ENCODE measurements at regions of chr1 and their contacts with region 1.

Region 1: DNA sequence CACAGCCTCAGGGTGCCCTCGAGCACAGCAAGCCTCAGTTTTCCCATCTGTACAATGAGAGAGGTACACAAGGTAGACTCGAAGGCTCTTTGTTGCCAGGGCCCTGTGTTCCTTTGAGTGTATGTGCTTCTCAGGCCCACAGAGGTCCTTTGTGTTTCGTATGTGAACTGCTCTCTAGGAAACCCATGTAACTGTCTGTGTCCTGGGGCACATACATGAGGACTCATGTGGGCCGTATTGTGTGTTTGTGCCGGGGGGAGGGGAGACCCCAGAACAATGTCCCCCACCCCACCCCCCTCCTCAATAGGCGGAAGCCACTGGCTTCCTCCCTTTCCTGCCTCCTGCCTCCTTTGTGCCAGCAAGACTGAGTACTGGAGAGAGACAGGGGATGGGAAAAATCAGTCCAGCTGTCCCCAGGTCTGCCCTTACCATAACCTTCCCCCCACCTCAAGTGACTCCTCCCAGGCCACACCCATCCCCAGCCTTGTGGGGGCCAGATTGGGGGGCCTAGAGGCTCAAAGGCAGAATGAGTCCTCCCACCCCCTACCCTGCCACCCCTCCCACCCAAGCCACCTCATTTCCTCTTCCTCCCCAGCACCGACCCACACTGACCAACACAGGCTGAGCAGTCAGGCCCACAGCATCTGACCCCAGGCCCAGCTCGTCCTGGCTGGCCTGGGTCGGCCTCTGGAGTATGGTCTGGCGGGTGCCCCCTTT is at the start of gene TIE1:
- DNase-seq: peak; percentile 94
- H3K4me3 ChIP-seq: peak within 1 kb of the TSS; percentile 47 to 96 (median 76)
- H3K27ac ChIP-seq: peak within 1 kb of the TSS; percentile 84
- H3K4me1 ChIP-seq: peaks cover 45% of the 10 kb centered on the region
- H3K27me3 ChIP-seq: no peaks in the 10 kb centered on the region
- CTCF ChIP-seq: no peak
- POLR2A ChIP-seq: peak; percentile 98
- total RNA-seq, gene TIE1: 562 and 620 TPM in 2 replicates

Region 2: DNA sequence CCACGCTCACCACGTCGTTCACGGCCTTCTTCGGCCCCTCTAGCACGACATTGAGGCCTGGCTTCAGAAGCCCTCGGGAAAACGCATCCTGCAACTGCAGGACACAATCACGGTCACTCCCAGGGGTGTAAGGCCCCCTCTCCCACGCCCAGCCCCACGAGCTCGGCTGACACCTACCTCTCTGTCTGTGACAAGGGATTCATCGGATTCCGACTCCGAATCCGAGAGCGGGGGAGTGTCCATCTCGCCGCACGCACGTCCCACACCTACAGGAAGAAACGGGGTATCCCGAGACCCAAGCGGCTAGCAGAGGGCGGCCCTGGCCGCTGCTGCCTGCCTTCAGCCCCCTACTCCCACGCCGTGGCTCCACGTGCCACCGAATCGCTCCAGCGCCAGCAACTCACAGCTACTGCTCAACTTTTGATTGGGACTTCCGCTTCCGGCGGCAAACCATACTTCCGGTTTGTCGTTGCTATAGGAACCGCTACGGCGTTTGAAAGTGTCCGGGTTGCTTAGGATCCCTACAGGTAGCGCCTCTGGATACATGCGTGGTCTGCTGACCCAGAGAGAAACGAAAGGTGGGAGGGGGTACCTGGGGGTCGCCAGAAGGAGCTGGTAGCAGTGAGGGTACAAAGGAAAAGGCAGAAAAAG is 128.5 kb before region 1 on chr1 and contains the starts of genes CFAP57 and EBNA1BP2:
- CTCF ChIA-PET with region 1: interaction called, 4 read pairs
- POLR2A ChIA-PET with region 1: no interaction called
- dilution Hi-C with region 1: no loop called
- intact Hi-C with region 1: loop called (anchors 1 kb)
- DNase-seq: peak; percentile 94
- H3K4me3 ChIP-seq: peak within 1 kb of the TSS; percentile 6 to 81 (median 51)
- H3K27ac ChIP-seq: peak within 1 kb of the TSS; percentile 30
- H3K4me1 ChIP-seq: peaks cover 12% of the 10 kb centered on the region
- H3K27me3 ChIP-seq: peaks cover 0 to 2% of the 10 kb centered on the region in 2 experiments
- CTCF ChIP-seq: no peak
- POLR2A ChIP-seq: peak; percentile 81
- total RNA-seq, gene CFAP57: 0.28 and 0.88 TPM in 2 replicates
- total RNA-seq, gene EBNA1BP2: 104 and 105 TPM in 2 replicates

Region 3: GRCh38 chr1:43238085-43238484 is 62.5 kb before region 1 on chr1:
- CTCF ChIA-PET with region 1: interaction called, 32 read pairs
- POLR2A ChIA-PET with region 1: interaction called, 5 read pairs
- dilution Hi-C with region 1: no loop called
- intact Hi-C with region 1: loop called (anchors 1 kb)
- DNase-seq: peak; percentile 77
- H3K4me3 ChIP-seq: no peak overlapping the region
- H3K27ac ChIP-seq: no peak overlapping the region
- H3K4me1 ChIP-seq: peaks cover 6% of the 10 kb centered on the region
- H3K27me3 ChIP-seq: no peaks in the 10 kb centered on the region
- CTCF ChIP-seq: peak; percentile 81 to 86
- POLR2A ChIP-seq: no peak

Region 4: GRCh38 chr1:43280692-43281091 is 19.8 kb before region 1 on chr1:
- CTCF ChIA-PET with region 1: interaction called, 6 read pairs
- POLR2A ChIA-PET with region 1: interaction called, 10 read pairs
- dilution Hi-C with region 1: no loop called
- intact Hi-C with region 1: no loop called
- DNase-seq: no peak
- H3K4me3 ChIP-seq: no peak overlapping the region
- H3K27ac ChIP-seq: no peak overlapping the region
- H3K4me1 ChIP-seq: no peaks in the 10 kb centered on the region
- H3K27me3 ChIP-seq: no peaks in the 10 kb centered on the region
- CTCF ChIP-seq: no peak
- POLR2A ChIP-seq: no peak

Region 5: DNA sequence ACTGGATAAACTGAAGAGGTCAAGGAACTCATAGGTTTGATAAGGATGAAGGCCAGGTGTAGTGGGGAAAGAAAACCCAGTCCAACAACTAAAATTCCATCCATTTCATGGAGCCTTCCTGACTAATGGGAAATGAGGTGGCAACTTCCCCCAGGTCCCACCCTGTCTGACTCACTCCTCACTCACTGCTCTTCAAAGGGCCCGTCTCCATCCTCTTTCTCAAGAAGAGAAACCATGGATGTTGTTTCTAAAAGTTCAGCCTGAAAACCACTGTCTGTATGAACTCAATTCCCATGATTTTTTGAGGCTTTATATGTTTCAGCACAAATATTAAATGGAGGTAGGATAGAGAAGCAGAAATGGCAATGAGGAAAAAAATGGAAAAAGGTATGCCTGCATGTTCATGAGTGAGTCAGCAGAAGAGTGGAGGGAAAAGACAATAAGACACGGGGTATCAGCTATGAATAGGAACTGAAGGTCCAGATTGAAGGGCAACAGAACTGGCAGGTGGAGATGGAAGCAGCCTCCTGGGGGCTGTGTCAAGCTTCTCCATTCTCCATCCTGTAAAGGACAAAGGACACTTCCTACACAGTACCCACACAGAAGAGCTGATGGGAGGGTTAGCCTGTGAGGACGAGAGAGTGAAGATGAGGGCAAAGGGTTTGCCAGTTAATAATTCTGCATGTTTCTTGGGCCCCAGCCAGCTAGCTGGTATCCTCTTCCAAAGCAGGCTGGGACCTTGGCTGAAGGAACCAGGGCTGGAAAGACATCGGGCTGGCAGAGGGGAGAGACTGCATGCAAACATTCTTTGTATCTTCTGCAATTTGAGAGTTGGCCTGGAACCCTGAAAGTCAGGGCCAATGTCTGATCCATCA is 72.8 kb after region 1 on chr1:
- CTCF ChIA-PET with region 1: no interaction called
- POLR2A ChIA-PET with region 1: no interaction called
- dilution Hi-C with region 1: no loop called
- intact Hi-C with region 1: loop called (anchors 2 kb)
- DNase-seq: peak; percentile 80
- H3K4me3 ChIP-seq: no peak overlapping the region
- H3K27ac ChIP-seq: peak overlapping the region; percentile 81
- H3K4me1 ChIP-seq: peaks cover 32% of the 10 kb centered on the region
- H3K27me3 ChIP-seq: no peaks in the 10 kb centered on the region
- CTCF ChIP-seq: no peak
- POLR2A ChIP-seq: no peak